Gastrocnemius medialis (tissue), 4 donors: ENCODE measurements at regions of chr11 and their contacts with region 1.

Region 1: DNA sequence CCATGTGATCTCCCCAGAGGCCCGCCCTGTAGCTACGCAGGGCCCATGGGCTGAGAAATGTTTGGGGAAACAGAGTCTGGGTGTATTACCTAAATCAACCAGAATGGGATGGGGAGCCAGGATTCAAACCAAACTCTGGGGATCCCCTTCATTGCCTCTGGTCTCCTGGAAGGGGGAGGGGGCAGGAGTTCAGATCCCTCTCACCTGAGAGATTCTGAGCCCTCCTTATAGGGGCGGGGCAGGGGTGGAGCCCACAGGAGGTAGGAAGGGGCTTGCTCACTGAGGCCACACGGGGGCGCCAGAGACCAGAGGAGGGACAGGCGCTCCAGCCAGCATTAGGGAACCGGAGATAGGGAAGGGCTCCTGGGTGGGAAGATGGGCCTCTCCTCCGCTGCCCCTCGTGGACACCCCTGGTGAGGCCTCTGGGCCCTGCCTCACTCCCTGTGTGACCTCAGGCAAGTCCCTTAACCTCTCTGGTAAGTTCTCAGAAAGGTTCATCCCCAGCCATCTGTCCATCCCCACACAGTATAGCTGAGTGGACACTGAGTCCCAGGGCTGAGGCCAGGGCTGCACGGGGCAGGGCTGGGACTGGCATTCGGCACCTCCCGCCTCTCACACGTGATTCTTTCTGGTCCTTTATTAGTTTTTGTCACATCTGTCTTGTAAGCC is 2.7 kb upstream of the CDC42BPG start:
- DNase-seq: peak; percentile 78 to 86
- ATAC-seq: peak; percentile 90 to 95
- H3K4me3 ChIP-seq: no peak overlapping the region
- H3K27ac ChIP-seq: peak overlapping the region in 2 of 4 donors; percentile 22 to 34
- H3K4me1 ChIP-seq: peaks cover 33 to 36% of the 10 kb centered on the region in 2 donors
- H3K27me3 ChIP-seq: peaks cover 0 to 3% (median 0%) of the 10 kb centered on the region in 3 donors
- CTCF ChIP-seq: peak; percentile 95 to 99 (median 99)
- POLR2A ChIP-seq: no peak

Region 2: DNA sequence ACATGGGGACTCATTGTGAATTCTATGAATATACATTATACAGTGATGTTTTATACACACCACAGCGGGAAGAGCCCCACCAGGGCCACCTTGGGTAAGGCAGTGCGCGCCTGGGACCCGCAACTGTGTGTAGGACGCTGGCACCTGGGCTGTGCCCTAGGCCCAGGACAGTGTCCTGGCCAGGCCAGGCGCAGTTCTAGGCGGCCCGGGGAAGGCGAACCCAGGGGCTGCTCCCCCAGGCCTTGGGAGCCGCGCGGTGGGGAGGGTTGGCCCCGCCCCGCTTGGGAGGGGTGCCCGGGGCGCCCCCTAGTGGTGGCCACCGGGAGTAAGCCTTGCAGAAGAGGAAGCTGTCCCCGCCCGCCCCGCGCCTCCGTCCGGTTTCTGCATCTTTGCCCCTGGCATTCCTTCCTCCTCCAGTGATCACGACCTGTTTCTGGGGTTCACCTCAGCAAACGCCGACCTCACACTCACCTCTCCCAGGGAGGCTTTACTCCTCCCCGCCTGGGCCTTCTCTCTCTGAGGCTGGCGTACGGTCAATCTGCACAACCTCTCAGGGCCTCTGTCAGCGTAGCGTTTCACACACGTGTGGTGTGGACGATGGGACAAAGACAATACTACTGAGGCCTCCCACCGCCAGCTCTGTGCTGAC is 40.7 kb after region 1 on chr11:
- in situ Hi-C with region 1: loop called (anchors 5 kb)
- intact Hi-C with region 1: loop called (anchors 1 kb)
- DNase-seq: peak; percentile 59 to 72
- ATAC-seq: peak; percentile 86 to 94
- H3K4me3 ChIP-seq: peak overlapping the region; percentile 16 to 58 (median 34)
- H3K27ac ChIP-seq: peak overlapping the region; percentile 41 to 72 (median 60)
- H3K4me1 ChIP-seq: peaks cover 8 to 9% of the 10 kb centered on the region in 2 donors
- H3K27me3 ChIP-seq: no peaks in the 10 kb centered on the region
- CTCF ChIP-seq: peak; percentile 88 to 99 (median 97)
- POLR2A ChIP-seq: no peak

Region 3: GRCh38 chr11:64894070-64894796 is 47.1 kb after region 1 on chr11:
- in situ Hi-C with region 1: loop called (anchors 5 kb)
- intact Hi-C with region 1: loop called (anchors 1 kb)
- DNase-seq: peak; percentile 51 to 76
- ATAC-seq: peak; percentile 54 to 85
- H3K4me3 ChIP-seq: no peak overlapping the region
- H3K27ac ChIP-seq: peak overlapping the region in 1 of 4 donors; percentile 18
- H3K4me1 ChIP-seq: peaks cover 0 to 4% of the 10 kb centered on the region in 2 donors
- H3K27me3 ChIP-seq: no peaks in the 10 kb centered on the region
- CTCF ChIP-seq: peak; percentile 80 to 94 (median 90)
- POLR2A ChIP-seq: no peak